Testis (tissue), 5 donors: ENCODE measurements at regions of chr13 and their contacts with region 1.

Region 1: GRCh38 chr13:98451676-98452470 is 125.0 kb downstream of the STK24 start:
- DNase-seq: no peak
- H3K4me3 ChIP-seq: no peak overlapping the region
- H3K27ac ChIP-seq: peak overlapping the region in 1 of 2 donors; percentile 12
- H3K4me1 ChIP-seq: peaks cover 28% of the 10 kb centered on the region
- H3K27me3 ChIP-seq: no peaks in the 10 kb centered on the region
- CTCF ChIP-seq: no peak
- POLR2A ChIP-seq: no peak

Region 2: GRCh38 chr13:98495627-98496478 is 44.0 kb after region 1 on chr13:
- intact Hi-C with region 1: loop called (anchors 2 kb)
- DNase-seq: no peak
- H3K4me3 ChIP-seq: no peak overlapping the region
- H3K27ac ChIP-seq: peak overlapping the region; percentile 5 to 77
- H3K4me1 ChIP-seq: peaks cover 16% of the 10 kb centered on the region
- H3K27me3 ChIP-seq: no peaks in the 10 kb centered on the region
- CTCF ChIP-seq: no peak
- POLR2A ChIP-seq: no peak